PC-9 (cell line): ENCODE measurements at regions of chr17 and their contacts with region 1.

Region 1: GRCh38 chr17:82551779-82552457 is 32.4 kb downstream of the FOXK2 start:
- DNase-seq: peak; percentile 46 to 76
- H3K4me3 ChIP-seq: no peak overlapping the region
- H3K27ac ChIP-seq: no peak overlapping the region
- H3K4me1 ChIP-seq: no peaks in the 10 kb centered on the region
- H3K27me3 ChIP-seq: no peaks in the 10 kb centered on the region
- CTCF ChIP-seq: peak; percentile 71

Region 2: GRCh38 chr17:82418001-82418986 is 133.6 kb before region 1 on chr17 and contains the starts of genes HEXD and OGFOD3:
- CTCF ChIA-PET with region 1: no interaction called
- POLR2A ChIA-PET with region 1: no interaction called
- intact Hi-C with region 1: loop called (anchors 5 kb)
- DNase-seq: peak; percentile 56 to 91
- H3K4me3 ChIP-seq: peak within 1 kb of the TSS; percentile 81
- H3K27ac ChIP-seq: no peak within 1 kb of the TSS
- H3K4me1 ChIP-seq: peaks cover 9% of the 10 kb centered on the region
- H3K27me3 ChIP-seq: no peaks in the 10 kb centered on the region
- CTCF ChIP-seq: no peak
- total RNA-seq, gene HEXD: 30.0 and 35.9 TPM in 2 replicates
- total RNA-seq, gene OGFOD3: 26.6 and 32.9 TPM in 2 replicates

Region 3: GRCh38 chr17:82536512-82537201 is 15.3 kb before region 1 on chr17:
- CTCF ChIA-PET with region 1: no interaction called
- POLR2A ChIA-PET with region 1: no interaction called
- intact Hi-C with region 1: no loop called
- DNase-seq: no peak
- H3K4me3 ChIP-seq: no peak overlapping the region
- H3K27ac ChIP-seq: peak overlapping the region; percentile 19; the same call in 1 of the 2 replicates
- H3K4me1 ChIP-seq: no peaks in the 10 kb centered on the region
- H3K27me3 ChIP-seq: no peaks in the 10 kb centered on the region
- CTCF ChIP-seq: no peak

Region 4: GRCh38 chr17:82734987-82735866 is 183.3 kb after region 1 on chr17 and contains the start of gene FN3K:
- CTCF ChIA-PET with region 1: no interaction called
- POLR2A ChIA-PET with region 1: no interaction called
- intact Hi-C with region 1: no loop called
- DNase-seq: peak in 1 of 2 experiments; percentile 52
- H3K4me3 ChIP-seq: peak within 1 kb of the TSS; percentile 56; the same call in 1 of the 2 replicates
- H3K27ac ChIP-seq: no peak within 1 kb of the TSS
- H3K4me1 ChIP-seq: no peaks in the 10 kb centered on the region
- H3K27me3 ChIP-seq: no peaks in the 10 kb centered on the region
- CTCF ChIP-seq: no peak
- total RNA-seq, gene FN3K: 14.0 and 22.5 TPM in 2 replicates

Region 5: GRCh38 chr17:82830249-82830661 is 278.3 kb after region 1 on chr17:
- CTCF ChIA-PET with region 1: no interaction called
- POLR2A ChIA-PET with region 1: no interaction called
- intact Hi-C with region 1: no loop called
- DNase-seq: no peak
- H3K4me3 ChIP-seq: no peak overlapping the region
- H3K27ac ChIP-seq: no peak overlapping the region
- H3K4me1 ChIP-seq: no peaks in the 10 kb centered on the region
- H3K27me3 ChIP-seq: no peaks in the 10 kb centered on the region
- CTCF ChIP-seq: no peak